Endothelial cell of umbilical vein (primary cell): ENCODE measurements at regions of chr6 and their contacts with region 1.

Region 1: GRCh38 chr6:20575125-20575524 is 40.9 kb downstream of the CDKAL1 start:
- DNase-seq: peak; percentile 38
- H3K4me3 ChIP-seq: no peak overlapping the region
- H3K27ac ChIP-seq: no peak overlapping the region
- H3K4me1 ChIP-seq: peaks cover 6% of the 10 kb centered on the region
- H3K27me3 ChIP-seq: no peaks in the 10 kb centered on the region
- CTCF ChIP-seq: no peak
- POLR2A ChIP-seq: no peak

Region 2: DNA sequence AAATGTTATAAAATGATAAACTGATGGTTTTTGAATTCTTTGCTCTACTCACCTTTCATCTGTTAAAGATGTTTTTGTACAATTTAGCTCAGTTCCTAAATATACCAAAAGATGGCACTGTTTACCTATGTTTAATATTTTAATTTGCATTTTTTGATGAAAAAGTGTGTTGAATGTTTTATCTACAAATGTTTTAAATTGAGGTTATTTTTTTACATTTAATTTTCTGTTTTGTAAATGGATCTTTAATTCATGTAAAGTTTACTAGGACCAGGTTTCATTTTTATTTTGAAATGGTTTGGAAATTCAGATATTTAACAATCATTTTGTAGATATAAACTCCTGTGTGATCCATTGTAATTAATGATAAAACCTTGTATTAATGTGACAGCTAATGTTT is 10.9 kb before region 1 on chr6:
- CTCF ChIA-PET with region 1: interaction called, 10 read pairs
- POLR2A ChIA-PET with region 1: no interaction called
- dilution Hi-C with region 1: no loop called
- intact Hi-C with region 1: no loop called
- DNase-seq: peak; percentile 59
- H3K4me3 ChIP-seq: peak overlapping the region in 1 of 3 experiments; percentile 28
- H3K27ac ChIP-seq: peak overlapping the region; percentile 32
- H3K4me1 ChIP-seq: peaks cover 12% of the 10 kb centered on the region
- H3K27me3 ChIP-seq: no peaks in the 10 kb centered on the region
- CTCF ChIP-seq: peak; percentile 16 to 33
- POLR2A ChIP-seq: no peak

Region 3: DNA sequence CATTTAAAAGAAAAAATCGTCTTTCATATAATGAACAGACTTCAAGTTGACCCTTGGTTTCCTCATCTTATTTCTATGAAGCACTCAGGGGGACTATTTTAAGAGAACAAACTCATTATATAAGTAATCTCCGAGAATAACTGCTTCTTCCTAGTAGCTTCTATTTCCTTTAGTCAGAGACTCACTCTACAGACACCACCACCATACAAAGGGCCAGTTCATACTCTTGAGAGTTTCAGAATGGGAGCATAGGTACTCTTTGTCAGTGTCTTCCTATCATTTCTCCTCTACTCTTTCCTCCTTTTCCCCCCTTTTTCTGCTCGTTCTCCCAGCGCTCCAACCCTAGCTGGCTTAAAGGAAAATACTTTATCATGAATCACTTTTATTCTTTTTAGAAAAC is 64.0 kb after region 1 on chr6:
- CTCF ChIA-PET with region 1: no interaction called
- POLR2A ChIA-PET with region 1: no interaction called
- dilution Hi-C with region 1: no loop called
- intact Hi-C with region 1: loop called (anchors 5 kb)
- DNase-seq: no peak
- H3K4me3 ChIP-seq: no peak overlapping the region
- H3K27ac ChIP-seq: no peak overlapping the region
- H3K4me1 ChIP-seq: no peaks in the 10 kb centered on the region
- H3K27me3 ChIP-seq: no peaks in the 10 kb centered on the region
- CTCF ChIP-seq: no peak
- POLR2A ChIP-seq: no peak